CD8-positive, alpha-beta T cell (primary cell): ENCODE measurements at regions of chr7 and their contacts with region 1.

Region 1: GRCh38 chr7:87876040-87876868 is at the starts of genes DBF4 and SLC25A40:
- DNase-seq: peak; percentile 87 to 98 (median 95)
- ATAC-seq: peak; percentile 90
- H3K4me3 ChIP-seq: peak within 1 kb of the TSS; percentile 85 to 91
- H3K4me3 Mint-ChIP-seq: peak within 1 kb of the TSS; percentile 94
- H3K27ac ChIP-seq: peak within 1 kb of the TSS; percentile 93 to 95
- H3K27ac Mint-ChIP-seq: peak within 1 kb of the TSS; percentile 97
- H3K4me1 ChIP-seq: peaks cover 31% of the 10 kb centered on the region
- H3K4me1 Mint-ChIP-seq: peaks cover 57% of the 10 kb centered on the region
- H3K27me3 ChIP-seq: no peaks in the 10 kb centered on the region
- H3K27me3 Mint-ChIP-seq: no peaks in the 10 kb centered on the region
- CTCF ChIP-seq: no peak
- total RNA-seq, gene DBF4: 75.6 to 81.6 TPM
- total RNA-seq, gene SLC25A40: 6.2 to 6.9 TPM

Region 2: GRCh38 chr7:86920154-86920553 is 956.1 kb before region 1 on chr7:
- CTCF ChIA-PET with region 1: no interaction called
- POLR2A ChIA-PET with region 1: no interaction called
- intact Hi-C with region 1: loop called in 1 of 2 experiments (anchors 5 kb)
- DNase-seq: no peak
- ATAC-seq: no peak
- H3K4me3 ChIP-seq: no peak overlapping the region
- H3K4me3 Mint-ChIP-seq: no peak overlapping the region
- H3K27ac ChIP-seq: no peak overlapping the region
- H3K27ac Mint-ChIP-seq: no peak overlapping the region
- H3K4me1 ChIP-seq: no peaks in the 10 kb centered on the region
- H3K4me1 Mint-ChIP-seq: no peaks in the 10 kb centered on the region
- H3K27me3 ChIP-seq: no peaks in the 10 kb centered on the region
- H3K27me3 Mint-ChIP-seq: peaks cover 11% of the 10 kb centered on the region
- CTCF ChIP-seq: no peak

Region 3: GRCh38 chr7:87152107-87152844 is 724.0 kb before region 1 on chr7 and contains the start of gene DMTF1:
- CTCF ChIA-PET with region 1: no interaction called
- POLR2A ChIA-PET with region 1: no interaction called
- intact Hi-C with region 1: loop called (anchors 5 kb)
- DNase-seq: peak; percentile 67 to 94 (median 87)
- ATAC-seq: peak; percentile 75
- H3K4me3 ChIP-seq: peak within 1 kb of the TSS; percentile 63 to 85
- H3K4me3 Mint-ChIP-seq: peak within 1 kb of the TSS; percentile 99
- H3K27ac ChIP-seq: peak within 1 kb of the TSS; percentile 92 to 97
- H3K27ac Mint-ChIP-seq: peak within 1 kb of the TSS; percentile 97
- H3K4me1 ChIP-seq: peaks cover 42% of the 10 kb centered on the region
- H3K4me1 Mint-ChIP-seq: peaks cover 48% of the 10 kb centered on the region
- H3K27me3 ChIP-seq: no peaks in the 10 kb centered on the region
- H3K27me3 Mint-ChIP-seq: no peaks in the 10 kb centered on the region
- CTCF ChIP-seq: no peak
- total RNA-seq, gene DMTF1: 97.9 to 103 TPM

Region 4: DNA sequence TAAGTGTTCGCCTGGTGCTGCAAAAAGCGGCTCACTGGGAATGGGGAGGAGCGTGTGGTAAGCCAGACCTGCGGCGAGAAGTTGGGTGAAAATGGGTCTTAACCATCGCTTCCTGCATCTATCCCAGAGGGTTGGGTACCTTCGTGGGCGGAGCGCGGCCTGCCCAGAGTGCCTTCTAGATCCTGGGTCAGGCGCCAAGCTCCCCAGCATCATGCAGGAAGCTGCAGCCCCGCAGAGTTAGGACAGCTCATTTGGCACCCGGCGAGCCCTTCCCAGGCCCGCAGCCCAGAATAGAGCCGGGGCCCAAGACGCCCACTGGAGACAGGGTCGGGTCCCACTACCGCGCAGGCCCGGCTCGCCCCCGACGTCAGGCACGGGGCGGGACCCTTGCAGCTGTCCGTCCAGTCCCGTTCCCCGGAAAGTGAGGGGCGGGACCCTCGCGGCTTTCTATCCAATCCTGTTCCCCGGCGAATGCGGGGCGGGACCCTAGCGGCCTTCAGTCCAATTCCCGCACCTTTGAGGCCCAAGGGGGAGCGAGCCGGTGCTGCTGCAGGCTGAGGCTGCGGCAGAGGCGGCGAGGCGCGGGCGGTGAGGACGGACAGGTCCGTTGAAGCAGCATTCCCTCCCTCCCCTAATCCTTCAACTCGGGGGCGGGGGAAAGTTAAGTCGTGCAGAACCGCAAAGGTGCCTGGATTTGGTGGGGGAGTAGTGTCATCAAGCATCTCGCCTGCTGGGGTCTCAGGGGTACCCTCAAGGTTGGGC is 530.9 kb before region 1 on chr7 and contains the start of gene CROT:
- CTCF ChIA-PET with region 1: no interaction called
- POLR2A ChIA-PET with region 1: no interaction called
- intact Hi-C with region 1: loop called (anchors 2 to 5 kb)
- DNase-seq: peak; percentile 84 to 96 (median 94)
- ATAC-seq: peak; percentile 96
- H3K4me3 ChIP-seq: peak within 1 kb of the TSS; percentile 91 to 96
- H3K4me3 Mint-ChIP-seq: peak within 1 kb of the TSS; percentile 95
- H3K27ac ChIP-seq: peak within 1 kb of the TSS; percentile 87 to 89
- H3K27ac Mint-ChIP-seq: peak within 1 kb of the TSS; percentile 96
- H3K4me1 ChIP-seq: peaks cover 25% of the 10 kb centered on the region
- H3K4me1 Mint-ChIP-seq: peaks cover 50% of the 10 kb centered on the region
- H3K27me3 ChIP-seq: no peaks in the 10 kb centered on the region
- H3K27me3 Mint-ChIP-seq: no peaks in the 10 kb centered on the region
- CTCF ChIP-seq: no peak
- total RNA-seq, gene CROT: 5.3 to 7.2 TPM

Region 5: DNA sequence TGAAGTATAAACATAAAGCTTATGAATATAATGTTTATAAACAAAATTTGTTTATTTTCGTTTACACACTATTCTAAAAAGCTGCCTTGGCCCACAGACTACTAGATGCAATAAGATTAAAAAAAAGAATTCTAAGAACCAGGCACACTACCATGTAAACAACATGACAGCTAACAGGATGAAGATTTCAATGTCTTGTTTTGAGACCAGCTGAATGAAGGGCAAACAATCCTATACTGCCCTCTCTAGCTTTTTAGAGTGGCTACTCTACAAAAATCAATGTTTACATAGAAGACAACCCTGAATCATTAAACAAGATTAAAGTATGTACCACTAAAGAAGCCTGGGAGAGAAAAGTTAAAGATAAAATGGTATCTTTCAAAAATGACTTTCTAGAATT is 38.7 kb before region 1 on chr7:
- CTCF ChIA-PET with region 1: no interaction called
- POLR2A ChIA-PET with region 1: no interaction called
- intact Hi-C with region 1: loop called in 1 of 2 experiments (anchors 5 kb)
- DNase-seq: no peak
- ATAC-seq: no peak
- H3K4me3 ChIP-seq: no peak overlapping the region
- H3K4me3 Mint-ChIP-seq: no peak overlapping the region
- H3K27ac ChIP-seq: no peak overlapping the region
- H3K27ac Mint-ChIP-seq: no peak overlapping the region
- H3K4me1 ChIP-seq: no peaks in the 10 kb centered on the region
- H3K4me1 Mint-ChIP-seq: no peaks in the 10 kb centered on the region
- H3K27me3 ChIP-seq: no peaks in the 10 kb centered on the region
- H3K27me3 Mint-ChIP-seq: no peaks in the 10 kb centered on the region
- CTCF ChIP-seq: no peak

Region 6: DNA sequence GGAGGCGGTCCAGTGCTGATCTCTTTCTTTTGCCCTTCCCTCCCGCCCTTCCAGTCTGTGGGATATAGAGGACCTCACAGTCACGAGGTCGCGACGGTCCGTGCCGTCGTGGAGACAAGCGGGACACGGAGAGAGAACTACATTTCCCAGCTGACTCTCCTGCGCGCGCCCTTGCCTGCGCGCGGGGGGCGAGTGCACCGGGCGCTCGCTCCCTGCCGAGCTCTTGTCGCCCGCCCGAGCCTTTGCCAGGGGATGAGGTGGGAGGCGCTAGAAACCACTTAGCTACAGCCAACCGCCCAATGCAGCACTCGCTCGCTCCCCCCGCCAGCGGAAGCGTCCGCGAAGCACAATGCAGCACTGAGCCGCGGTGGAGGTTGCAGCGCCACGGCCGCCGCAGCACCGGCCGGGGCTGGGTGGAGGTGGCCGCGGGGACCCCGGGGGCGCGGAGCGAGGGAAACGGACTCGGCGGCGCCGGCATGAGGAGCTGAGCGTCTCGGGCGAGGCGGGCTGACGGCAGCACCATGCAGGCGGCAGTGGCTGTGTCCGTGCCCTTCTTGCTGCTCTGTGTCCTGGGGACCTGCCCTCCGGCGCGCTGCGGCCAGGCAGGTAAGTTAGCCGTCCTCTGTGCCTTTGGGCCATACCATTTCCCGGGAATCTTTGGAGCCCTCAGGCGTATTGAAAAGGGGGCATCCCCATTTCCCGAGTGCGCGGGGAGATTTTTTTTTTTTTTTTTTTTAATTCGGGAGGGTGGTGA is 57.9 kb after region 1 on chr7 and contains the start of gene ADAM22:
- CTCF ChIA-PET with region 1: interaction called, 3 read pairs
- POLR2A ChIA-PET with region 1: interaction called, 3 read pairs
- intact Hi-C with region 1: loop called (anchors 1 kb)
- DNase-seq: peak; percentile 65 to 94 (median 85)
- ATAC-seq: peak; percentile 94
- H3K4me3 ChIP-seq: peak within 1 kb of the TSS; percentile 73 to 82
- H3K4me3 Mint-ChIP-seq: peak within 1 kb of the TSS; percentile 89
- H3K27ac ChIP-seq: peak within 1 kb of the TSS; percentile 32 to 71
- H3K27ac Mint-ChIP-seq: peak within 1 kb of the TSS; percentile 79
- H3K4me1 ChIP-seq: peaks cover 7% of the 10 kb centered on the region
- H3K4me1 Mint-ChIP-seq: peaks cover 11% of the 10 kb centered on the region
- H3K27me3 ChIP-seq: no peaks in the 10 kb centered on the region
- H3K27me3 Mint-ChIP-seq: no peaks in the 10 kb centered on the region
- CTCF ChIP-seq: no peak
- total RNA-seq, gene ADAM22: 1.1 to 1.7 TPM